Activated CD4-positive, alpha-beta T cell treated with anti-CD3 and anti-CD28 coated beads, Interleukin-2, amount 10 ng/mL, durations not matched to agents 24 days and 14 days (primary cell): ENCODE measurements at regions of chr18 and their contacts with region 1.

Region 1: GRCh38 chr18:48951448-48952286 is 902 bp upstream of the SMAD7 start:
- DNase-seq: peak; percentile 90
- H3K4me3 Mint-ChIP-seq: peak overlapping the region; percentile 94
- H3K27ac Mint-ChIP-seq: peak overlapping the region; percentile 90
- H3K4me1 Mint-ChIP-seq: peaks cover 39% of the 10 kb centered on the region
- H3K27me3 Mint-ChIP-seq: no peaks in the 10 kb centered on the region

Region 2: DNA sequence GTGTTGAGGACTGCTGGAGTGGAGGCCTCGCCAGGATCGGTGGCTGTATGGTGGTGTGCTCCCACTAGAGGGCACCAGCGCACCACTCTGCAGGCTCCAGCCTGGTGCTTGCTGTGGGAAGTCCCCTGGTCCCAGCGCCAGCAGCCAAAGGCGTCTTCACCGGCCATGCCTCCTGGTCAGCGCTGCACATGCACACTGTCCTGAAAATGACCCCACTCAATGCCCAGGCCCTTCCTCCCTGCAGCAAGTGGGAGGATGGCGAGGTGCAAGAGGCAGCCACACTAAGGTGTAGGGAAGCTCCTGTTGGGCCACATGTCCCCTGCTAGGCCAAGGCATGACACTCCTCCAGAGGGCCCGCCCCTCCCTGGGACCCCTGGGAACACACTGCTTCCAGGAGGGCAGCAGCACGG is 276.3 kb before region 1 on chr18:
- intact Hi-C with region 1: loop called (anchors 5 kb)
- DNase-seq: peak; percentile 95
- H3K4me3 Mint-ChIP-seq: no peak overlapping the region
- H3K27ac Mint-ChIP-seq: no peak overlapping the region
- H3K4me1 Mint-ChIP-seq: peaks cover 2% of the 10 kb centered on the region
- H3K27me3 Mint-ChIP-seq: no peaks in the 10 kb centered on the region

Region 3: GRCh38 chr18:48834413-48835031 is 117.1 kb before region 1 on chr18:
- intact Hi-C with region 1: loop called (anchors 1 kb)
- DNase-seq: peak; percentile 91
- H3K4me3 Mint-ChIP-seq: peak overlapping the region; percentile 89
- H3K27ac Mint-ChIP-seq: peak overlapping the region; percentile 99
- H3K4me1 Mint-ChIP-seq: peaks cover 66% of the 10 kb centered on the region
- H3K27me3 Mint-ChIP-seq: no peaks in the 10 kb centered on the region

Region 4: DNA sequence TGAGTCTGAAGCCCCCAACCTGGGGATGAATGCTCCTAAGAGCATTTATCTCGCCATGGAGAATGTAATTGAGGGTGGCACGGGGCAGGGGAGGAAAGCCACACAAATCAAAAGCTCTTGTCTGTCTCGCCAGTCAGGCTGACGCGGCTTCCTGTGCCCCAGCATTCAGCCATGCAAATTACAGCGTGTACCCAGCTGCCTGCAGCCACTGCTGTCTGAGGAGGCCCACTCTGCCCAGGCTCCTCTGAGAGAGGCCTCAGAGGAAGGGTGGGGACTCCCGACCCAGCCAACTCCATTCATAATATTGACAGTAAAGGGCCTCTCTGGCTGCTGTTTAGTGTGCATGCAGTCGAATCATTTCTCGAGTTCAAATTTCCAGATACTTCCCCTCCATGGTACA is 22.9 kb before region 1 on chr18:
- intact Hi-C with region 1: loop called (anchors 1 kb)
- DNase-seq: peak; percentile 89
- H3K4me3 Mint-ChIP-seq: peak overlapping the region; percentile 84
- H3K27ac Mint-ChIP-seq: peak overlapping the region; percentile 89
- H3K4me1 Mint-ChIP-seq: peaks cover 89% of the 10 kb centered on the region
- H3K27me3 Mint-ChIP-seq: no peaks in the 10 kb centered on the region

Region 5: DNA sequence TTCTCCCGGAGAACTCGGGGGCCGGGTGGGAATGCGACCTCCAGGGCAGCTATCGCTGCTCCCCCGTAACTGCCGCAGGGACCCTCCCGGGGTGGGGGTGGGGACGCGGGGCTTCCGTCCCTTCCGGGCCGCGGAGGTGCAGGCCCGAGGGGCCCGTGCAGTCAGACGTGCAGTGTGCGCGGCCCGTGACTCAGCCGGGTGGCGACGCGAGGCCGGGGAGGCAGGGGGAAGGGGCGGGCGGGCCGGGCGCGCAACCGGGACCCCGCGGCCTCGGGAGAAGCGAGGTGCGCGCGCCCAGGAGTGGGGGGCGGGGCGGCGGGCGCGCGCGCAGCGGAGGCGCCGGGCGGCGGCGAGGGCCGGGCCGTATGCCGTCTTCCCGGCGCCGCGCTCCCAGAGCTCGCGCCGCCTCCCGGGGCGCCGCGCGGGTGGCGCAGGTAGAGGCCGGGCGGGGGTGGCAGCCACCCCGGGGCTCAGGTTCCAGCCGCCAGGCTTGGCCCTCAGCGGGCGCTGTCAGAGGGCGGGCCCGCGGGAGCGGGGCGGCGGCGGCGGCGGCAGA is 24.1 kb after region 1 on chr18:
- intact Hi-C with region 1: loop called (anchors 2 kb)
- DNase-seq: peak; percentile 82
- H3K4me3 Mint-ChIP-seq: peak overlapping the region; percentile 51
- H3K27ac Mint-ChIP-seq: no peak overlapping the region
- H3K4me1 Mint-ChIP-seq: peaks cover 16% of the 10 kb centered on the region
- H3K27me3 Mint-ChIP-seq: peaks cover 51% of the 10 kb centered on the region

Region 6: DNA sequence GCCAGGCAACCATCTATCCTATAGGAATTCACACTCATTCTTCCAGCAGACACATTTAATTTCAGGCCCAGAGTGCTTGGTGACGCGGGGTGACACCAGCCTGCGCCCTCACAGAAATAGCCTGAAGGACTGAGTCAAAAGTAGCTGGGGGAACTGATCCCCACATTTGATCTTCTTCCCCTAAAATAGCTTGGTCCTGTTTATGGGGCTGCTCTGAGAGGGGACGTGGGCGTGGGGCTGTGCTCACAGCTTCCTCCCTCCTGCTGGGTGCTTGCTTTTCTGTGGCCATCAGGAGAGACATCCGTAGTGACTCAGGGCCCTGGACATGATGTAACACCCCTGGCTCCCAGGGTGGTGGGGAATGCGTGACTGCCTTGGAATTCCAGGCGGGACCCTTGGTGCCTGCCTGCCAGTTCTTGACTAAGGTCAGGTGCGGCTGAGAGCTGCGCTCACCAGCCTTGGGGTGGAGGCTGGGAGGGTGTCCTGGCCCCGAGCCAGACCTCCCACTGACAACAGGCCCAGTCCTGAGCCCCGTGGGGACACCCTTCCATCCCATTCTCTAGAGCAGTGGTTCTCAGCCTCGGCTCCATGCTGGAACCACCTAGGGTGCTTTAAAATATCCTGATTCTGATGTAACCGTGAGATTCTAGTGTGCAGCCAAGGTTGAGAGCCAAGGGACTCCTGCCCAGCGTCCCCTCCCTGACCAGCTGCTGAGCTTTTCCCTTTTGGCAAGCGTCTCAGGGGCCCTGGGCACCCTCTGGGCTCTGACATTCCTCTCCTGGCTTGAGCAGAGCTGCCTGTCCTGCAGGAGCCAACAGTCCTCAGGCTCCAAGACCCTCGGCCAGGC is 46.5 kb after region 1 on chr18:
- intact Hi-C with region 1: no loop called
- DNase-seq: no peak
- H3K4me3 Mint-ChIP-seq: no peak overlapping the region
- H3K27ac Mint-ChIP-seq: no peak overlapping the region
- H3K4me1 Mint-ChIP-seq: peaks cover 14% of the 10 kb centered on the region
- H3K27me3 Mint-ChIP-seq: peaks cover 6% of the 10 kb centered on the region